AG04450 (cell line): ENCODE measurements at regions of chr7 and their contacts with region 1.

Region 1: GRCh38 chr7:77276120-77276519 is 76.5 kb upstream of the FGL2 start:
- DNase-seq: peak; percentile 23
- H3K4me3 ChIP-seq: no peak overlapping the region
- H3K27ac ChIP-seq: peak overlapping the region; percentile 69
- H3K27me3 ChIP-seq: no peaks in the 10 kb centered on the region
- CTCF ChIP-seq: no peak

Region 2: GRCh38 chr7:77258014-77258413 is 18.1 kb before region 1 on chr7:
- CTCF ChIA-PET with region 1: interaction called, 5 read pairs
- POLR2A ChIA-PET with region 1: interaction called, 21 read pairs
- DNase-seq: peak; percentile 55
- H3K4me3 ChIP-seq: no peak overlapping the region
- H3K27ac ChIP-seq: peak overlapping the region; percentile 12
- H3K27me3 ChIP-seq: no peaks in the 10 kb centered on the region
- CTCF ChIP-seq: no peak

Region 3: DNA sequence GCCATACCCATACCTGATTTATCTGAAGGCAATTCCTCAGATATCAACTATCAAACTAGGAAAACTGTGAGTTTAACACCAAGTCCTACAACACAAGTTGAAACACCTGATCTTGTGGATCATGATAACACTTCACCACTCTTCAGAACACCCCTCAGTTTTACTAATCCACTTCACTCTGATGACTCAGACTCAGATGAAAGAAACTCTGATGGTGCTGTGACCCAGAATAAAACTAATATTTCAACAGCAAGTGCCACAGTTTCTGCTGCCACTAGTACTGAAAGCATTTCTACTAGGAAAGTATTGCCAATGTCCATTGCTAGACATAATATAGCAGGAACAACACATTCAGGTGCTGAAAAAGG is 351.2 kb after region 1 on chr7:
- CTCF ChIA-PET with region 1: no interaction called
- POLR2A ChIA-PET with region 1: no interaction called
- DNase-seq: no peak
- H3K4me3 ChIP-seq: no peak overlapping the region
- H3K27ac ChIP-seq: no peak overlapping the region
- H3K27me3 ChIP-seq: no peaks in the 10 kb centered on the region
- CTCF ChIP-seq: no peak